Activated CD8-positive, alpha-beta T cell treated with anti-CD3 and anti-CD28 coated beads for 36 hours (primary cell): ENCODE measurements at regions of chr16 and their contacts with region 1.

Region 1: GRCh38 chr16:19886073-19886941 is 1.7 kb upstream of the GPRC5B start:
- DNase-seq: peak; percentile 90
- ATAC-seq: peak; percentile 86
- H3K4me3 Mint-ChIP-seq: peak overlapping the region; percentile 73
- H3K27ac Mint-ChIP-seq: peak overlapping the region; percentile 16
- H3K4me1 Mint-ChIP-seq: peaks cover 20% of the 10 kb centered on the region
- H3K27me3 Mint-ChIP-seq: peaks cover 30% of the 10 kb centered on the region
- CTCF ChIP-seq: peak; percentile 98

Region 2: GRCh38 chr16:19583665-19584300 is 302.5 kb before region 1 on chr16:
- CTCF ChIA-PET with region 1: interaction called, 14 read pairs
- POLR2A ChIA-PET with region 1: no interaction called
- intact Hi-C with region 1: no loop called
- DNase-seq: peak; percentile 32
- ATAC-seq: peak; percentile 73
- H3K4me3 Mint-ChIP-seq: no peak overlapping the region
- H3K27ac Mint-ChIP-seq: no peak overlapping the region
- H3K4me1 Mint-ChIP-seq: peaks cover 10% of the 10 kb centered on the region
- H3K27me3 Mint-ChIP-seq: no peaks in the 10 kb centered on the region
- CTCF ChIP-seq: peak; percentile 76

Region 3: DNA sequence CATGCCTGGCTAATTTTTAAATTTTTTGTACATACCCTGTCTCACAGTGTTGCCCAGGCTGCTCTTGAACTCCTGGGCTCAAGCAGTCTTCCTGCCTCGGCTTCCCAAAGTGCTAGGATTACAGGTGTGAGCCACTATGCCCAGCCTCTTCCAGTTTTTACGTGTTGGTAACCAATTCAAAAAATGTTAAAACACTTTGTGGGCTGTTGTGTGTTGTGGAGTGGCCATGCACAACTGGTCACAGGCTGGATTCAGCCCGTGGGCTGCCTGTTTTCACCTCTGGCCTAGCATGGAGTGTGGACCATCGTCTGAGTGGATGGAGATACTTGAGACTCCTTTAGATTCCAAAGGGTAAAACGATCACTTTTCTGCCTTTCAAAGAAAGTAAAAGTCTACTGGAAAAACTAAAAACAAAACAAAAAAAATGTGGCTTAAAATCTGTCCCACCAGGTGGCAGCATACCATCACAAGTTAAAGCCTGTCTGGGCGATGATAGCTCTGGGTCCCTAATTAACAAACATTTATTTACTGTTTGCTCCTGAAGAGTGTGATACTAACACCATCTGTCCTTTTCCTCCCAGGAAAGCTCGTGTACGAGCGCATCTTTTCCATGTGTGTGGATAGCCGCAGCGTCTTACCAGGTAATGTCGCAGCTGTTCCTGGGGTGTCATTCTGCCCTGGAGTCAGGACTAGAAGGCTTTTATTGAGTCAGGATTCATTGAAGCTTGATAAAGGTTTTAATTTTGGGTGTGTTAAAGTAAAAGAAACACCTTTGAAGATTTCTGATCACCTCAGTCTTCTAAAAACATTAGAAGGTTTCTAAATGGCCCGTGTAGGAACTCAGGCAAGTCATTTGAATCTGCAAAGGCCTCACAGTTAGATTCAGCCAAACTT is 285.0 kb before region 1 on chr16:
- CTCF ChIA-PET with region 1: interaction called, 56 read pairs
- POLR2A ChIA-PET with region 1: interaction called, 3 read pairs
- intact Hi-C with region 1: loop called (anchors 2 kb)
- DNase-seq: peak; percentile 49
- ATAC-seq: no peak
- H3K4me3 Mint-ChIP-seq: no peak overlapping the region
- H3K27ac Mint-ChIP-seq: no peak overlapping the region
- H3K4me1 Mint-ChIP-seq: no peaks in the 10 kb centered on the region
- H3K27me3 Mint-ChIP-seq: no peaks in the 10 kb centered on the region
- CTCF ChIP-seq: peak; percentile 77

Region 4: DNA sequence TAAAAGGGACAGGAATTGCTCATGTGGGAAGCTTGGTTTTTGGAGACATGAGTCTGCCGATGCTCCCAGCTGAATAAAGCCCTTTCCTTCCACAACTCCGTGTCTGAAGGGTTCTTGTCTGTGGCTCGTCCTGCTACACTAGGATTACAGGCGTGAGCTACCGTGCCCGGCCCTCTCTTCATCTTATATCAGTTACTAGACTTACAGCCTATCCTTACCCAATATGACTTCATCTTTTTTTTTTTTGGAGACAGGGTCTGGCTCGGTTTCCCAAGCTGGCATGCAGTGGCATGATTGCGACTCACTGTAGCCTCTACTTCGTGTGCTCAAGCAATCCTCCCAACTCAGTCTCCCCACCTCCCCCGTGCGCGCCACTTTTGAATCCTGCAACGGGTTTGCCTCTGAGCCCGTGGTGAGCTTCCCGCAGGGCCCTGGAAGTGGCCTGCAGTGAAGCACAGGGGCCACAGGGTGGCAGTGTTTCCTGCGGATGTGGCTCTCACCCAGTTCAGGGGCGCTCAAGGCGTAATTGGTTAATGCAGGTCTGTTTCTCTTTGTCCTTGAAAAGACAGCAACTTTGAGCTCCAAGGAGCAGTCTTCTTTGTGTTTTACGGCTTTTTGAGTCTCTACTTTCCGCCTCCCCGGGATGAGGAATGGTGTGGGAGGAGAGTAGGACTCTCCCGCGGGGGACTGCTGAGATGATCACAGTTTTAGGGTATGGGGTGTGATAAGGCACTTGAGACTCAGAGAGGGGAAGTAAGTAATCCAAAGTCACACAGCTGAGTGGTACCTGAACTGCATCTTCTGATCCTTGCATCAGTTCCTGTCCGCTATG is 21.1 kb after region 1 on chr16:
- CTCF ChIA-PET with region 1: interaction called, 17 read pairs
- POLR2A ChIA-PET with region 1: no interaction called
- intact Hi-C with region 1: no loop called
- DNase-seq: peak; percentile 79
- ATAC-seq: peak; percentile 100
- H3K4me3 Mint-ChIP-seq: peak overlapping the region; percentile 46
- H3K27ac Mint-ChIP-seq: no peak overlapping the region
- H3K4me1 Mint-ChIP-seq: peaks cover 11% of the 10 kb centered on the region
- H3K27me3 Mint-ChIP-seq: peaks cover 15% of the 10 kb centered on the region
- CTCF ChIP-seq: peak; percentile 97

Region 5: DNA sequence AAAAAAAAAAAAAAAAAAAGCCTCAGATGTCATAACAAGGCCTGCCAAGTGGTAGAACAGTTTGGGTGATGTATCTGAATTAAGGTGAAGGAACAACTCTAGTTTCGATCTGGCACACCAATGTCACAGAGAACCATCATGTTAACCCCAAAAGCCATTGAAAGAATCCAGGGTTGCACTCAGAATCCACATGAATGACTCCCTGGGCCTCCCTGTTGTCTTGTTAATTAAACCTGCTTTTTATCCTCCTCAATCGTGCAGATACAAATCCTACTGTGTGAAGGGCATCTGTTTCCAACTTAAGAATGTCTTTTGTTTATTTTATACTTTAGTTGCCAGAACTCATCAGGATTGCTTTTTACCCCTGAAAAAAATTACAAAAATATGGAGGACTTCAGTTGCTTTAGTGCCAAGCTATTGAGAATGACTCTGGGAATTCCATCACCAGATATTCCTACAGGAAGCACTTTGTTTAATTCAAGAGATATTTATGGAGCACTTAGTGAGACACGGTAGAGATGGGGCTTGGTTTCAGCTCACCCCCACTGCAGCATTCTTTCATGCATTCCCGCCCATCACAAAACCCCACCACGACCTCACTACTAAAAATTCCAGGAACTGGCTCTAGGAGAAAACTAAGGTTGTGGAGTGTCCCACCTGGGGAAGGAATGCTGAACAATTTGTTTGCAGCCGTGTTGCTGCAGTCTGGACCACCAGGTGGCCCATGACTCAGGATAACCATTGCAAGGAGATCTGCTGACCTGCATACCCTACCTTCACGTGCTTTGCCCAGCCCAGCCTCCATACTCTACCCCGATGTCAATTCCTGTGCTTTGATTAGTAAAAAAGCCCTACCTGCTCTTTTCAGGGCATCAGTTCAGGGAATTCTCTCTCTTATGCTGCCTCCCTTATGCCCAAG is 62.1 kb after region 1 on chr16:
- CTCF ChIA-PET with region 1: no interaction called
- POLR2A ChIA-PET with region 1: no interaction called
- intact Hi-C with region 1: no loop called
- DNase-seq: no peak
- ATAC-seq: no peak
- H3K4me3 Mint-ChIP-seq: no peak overlapping the region
- H3K27ac Mint-ChIP-seq: no peak overlapping the region
- H3K4me1 Mint-ChIP-seq: no peaks in the 10 kb centered on the region
- H3K27me3 Mint-ChIP-seq: peaks cover 4% of the 10 kb centered on the region
- CTCF ChIP-seq: no peak